Posterior vena cava (tissue), 2 donors: ENCODE measurements at regions of chr5 and their contacts with region 1.

Region 1: DNA sequence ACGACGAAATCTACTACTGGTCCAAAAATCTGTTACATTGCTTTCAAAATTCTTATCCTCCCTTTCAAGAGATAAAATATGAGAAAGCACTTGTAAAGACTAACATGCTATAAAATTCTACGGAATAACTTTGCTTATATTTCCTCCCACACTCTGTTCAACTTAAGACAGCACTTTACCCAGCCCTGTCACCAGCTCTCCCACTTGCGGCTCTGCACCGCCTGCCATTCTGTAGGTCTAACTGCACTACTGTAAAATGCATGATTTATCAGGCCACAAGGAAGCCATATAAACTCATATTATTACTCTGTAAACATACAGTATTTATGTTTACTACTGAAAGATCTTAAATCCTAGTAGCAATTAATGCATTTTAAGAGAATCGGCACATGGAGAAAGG is 11.4 kb downstream of the CTNND2 start:
- DNase-seq: no peak

Region 2: DNA sequence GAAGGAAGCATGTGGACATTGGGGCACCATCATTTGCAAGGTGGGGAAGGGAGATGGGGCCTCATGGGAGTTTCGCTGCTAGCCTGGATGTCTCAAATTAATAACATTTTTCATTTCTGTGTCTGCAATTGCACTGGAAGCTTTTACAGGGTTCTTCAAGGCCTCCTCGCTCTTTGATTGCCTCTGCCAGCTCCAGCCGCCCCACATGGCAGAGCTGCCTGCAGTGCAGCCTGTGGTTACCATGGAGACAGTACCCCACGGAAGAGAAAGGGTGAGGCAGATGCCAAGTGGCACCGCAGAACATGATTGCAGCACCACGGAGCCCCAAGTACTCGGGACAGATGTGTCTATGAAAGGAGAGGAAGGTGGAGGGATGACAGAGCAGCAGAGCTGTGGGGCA is 14.0 kb before region 1 on chr5:
- intact Hi-C with region 1: loop called in 1 of 2 experiments (anchors 1 kb)
- DNase-seq: peak; percentile 29